ENCODE measurements at regions of chr3 and their contacts with region 1.

Region 1: DNA sequence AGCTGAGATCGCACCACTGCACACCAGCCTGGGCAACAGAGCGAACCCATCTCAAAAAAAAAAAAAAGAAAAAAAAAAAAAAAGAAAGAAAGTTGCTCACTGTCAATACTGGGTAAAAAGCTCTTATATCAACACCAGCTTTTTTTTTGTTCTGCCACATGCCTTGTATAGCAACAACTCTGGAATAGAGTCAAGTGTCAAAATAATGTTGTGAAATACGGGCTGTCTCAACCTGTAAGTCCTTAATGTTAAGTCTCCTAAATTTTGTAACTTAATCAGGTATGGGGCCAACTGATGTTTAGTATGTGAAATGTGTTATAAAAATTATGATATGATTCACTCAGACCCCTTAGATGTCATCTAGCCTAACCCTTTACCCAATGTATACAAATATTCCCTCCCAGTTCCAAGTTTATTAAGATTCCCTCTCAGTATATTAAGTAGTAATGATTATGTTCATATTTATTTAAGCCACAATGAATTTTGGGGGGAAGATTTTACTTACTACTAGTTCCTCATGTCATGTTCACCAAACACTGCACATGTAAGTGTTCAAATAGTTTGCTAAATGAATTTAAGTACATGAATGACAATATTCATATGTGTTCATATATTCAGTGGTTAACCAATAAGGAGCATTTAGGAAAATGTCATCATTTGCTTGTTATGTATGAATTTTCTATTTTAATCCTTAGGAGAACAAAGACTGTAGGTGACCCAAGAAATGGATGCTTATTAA is 52.2 kb downstream of the GPR160 start:
- DNase-seq: no peak
- ATAC-seq: peak; percentile 58
- H3K4me3 Mint-ChIP-seq: no peak overlapping the region
- H3K27ac Mint-ChIP-seq: peak overlapping the region; percentile 42
- H3K4me1 Mint-ChIP-seq: peaks cover 9% of the 10 kb centered on the region
- H3K27me3 Mint-ChIP-seq: no peaks in the 10 kb centered on the region

Region 2: DNA sequence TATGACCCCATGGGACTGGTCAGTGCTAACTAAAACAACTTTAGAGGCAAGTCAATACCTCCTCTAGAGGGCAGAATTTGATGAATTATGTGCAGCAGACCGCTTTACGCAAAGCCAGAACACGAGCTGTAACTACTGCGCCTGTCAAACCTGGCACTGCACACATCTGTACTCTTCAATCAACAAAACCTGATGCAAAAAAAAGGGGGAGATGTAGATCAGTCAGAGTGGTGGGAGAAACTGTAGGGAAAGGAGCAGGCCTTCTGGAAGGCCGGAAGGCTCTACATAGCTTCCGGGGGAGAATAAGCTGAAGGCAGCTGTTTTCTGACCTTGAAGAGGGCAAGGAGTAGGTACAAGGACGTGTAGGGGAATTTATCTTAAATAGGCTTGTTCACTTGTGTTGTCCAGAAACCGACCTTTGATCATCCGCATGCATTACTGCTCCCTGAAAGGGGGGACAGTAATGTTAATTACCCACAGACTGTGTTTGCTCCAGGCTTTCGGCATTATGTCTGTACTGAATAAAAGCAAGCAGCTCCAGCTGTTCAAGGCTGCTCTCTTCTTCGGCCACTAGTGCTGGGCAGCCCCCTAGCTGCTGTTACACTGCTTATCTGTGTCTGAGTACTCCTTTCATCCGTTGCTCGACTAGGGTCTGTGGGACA is 11.3 kb before region 1 on chr3:
- CTCF ChIA-PET with region 1: interaction called, 10 read pairs
- POLR2A ChIA-PET with region 1: no interaction called
- intact Hi-C with region 1: no loop called
- DNase-seq: no peak
- ATAC-seq: no peak
- H3K4me3 Mint-ChIP-seq: no peak overlapping the region
- H3K27ac Mint-ChIP-seq: no peak overlapping the region
- H3K4me1 Mint-ChIP-seq: peaks cover 6% of the 10 kb centered on the region
- H3K27me3 Mint-ChIP-seq: no peaks in the 10 kb centered on the region

Region 3: DNA sequence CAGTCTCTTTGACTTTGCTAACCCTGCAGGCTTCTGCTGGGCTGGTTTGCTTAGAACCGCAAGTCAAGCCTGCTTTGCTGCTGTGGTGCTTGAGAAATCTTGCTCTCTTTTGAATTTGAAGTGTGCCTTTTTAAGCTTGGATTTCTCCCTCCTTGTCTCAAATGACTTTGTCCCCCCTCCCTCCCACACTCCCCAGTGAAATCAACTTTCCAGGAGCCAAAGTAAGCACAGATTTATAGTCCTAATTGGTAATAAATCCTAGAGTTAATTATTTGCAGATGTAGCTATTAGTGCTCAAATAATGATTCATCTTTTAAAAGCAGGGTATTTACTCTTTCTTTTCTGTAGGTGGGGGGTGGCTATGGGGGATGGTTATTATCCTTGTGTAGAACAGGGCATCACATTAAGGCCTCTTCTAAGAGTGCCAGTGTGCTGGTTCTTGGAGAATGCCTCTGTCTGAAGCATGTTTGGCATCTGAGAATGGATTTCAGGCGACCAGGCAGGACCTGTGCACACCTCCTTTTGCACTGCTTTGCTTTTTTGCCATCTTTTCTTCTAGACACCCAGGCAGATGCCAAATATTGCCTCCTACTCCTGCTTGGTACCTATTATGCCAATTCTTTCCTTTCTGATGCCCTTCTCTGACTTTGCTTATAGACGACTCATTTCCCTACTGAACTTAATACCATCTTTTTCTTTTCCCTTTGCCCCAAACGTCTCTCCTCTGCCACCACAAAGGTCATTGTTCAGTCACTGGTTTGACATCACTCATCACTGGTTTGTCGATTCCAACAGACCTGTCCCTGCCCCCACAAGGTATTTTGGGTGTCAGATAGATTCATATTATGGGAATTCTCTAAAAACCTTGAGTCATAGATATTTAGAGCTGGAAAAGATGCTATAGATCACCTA is 379.4 kb after region 1 on chr3:
- CTCF ChIA-PET with region 1: no interaction called
- POLR2A ChIA-PET with region 1: no interaction called
- intact Hi-C with region 1: no loop called
- DNase-seq: no peak
- ATAC-seq: peak; percentile 58
- H3K4me3 Mint-ChIP-seq: no peak overlapping the region
- H3K27ac Mint-ChIP-seq: no peak overlapping the region
- H3K4me1 Mint-ChIP-seq: peaks cover 3% of the 10 kb centered on the region
- H3K27me3 Mint-ChIP-seq: peaks cover 16% of the 10 kb centered on the region